ENCODE measurements at regions of chr22 and their contacts with region 1.

Region 1: GRCh38 chr22:27880778-27881394 is 38.2 kb downstream of the PITPNB start:
- DNase-seq: no peak
- ATAC-seq: peak; percentile 78

Region 2: DNA sequence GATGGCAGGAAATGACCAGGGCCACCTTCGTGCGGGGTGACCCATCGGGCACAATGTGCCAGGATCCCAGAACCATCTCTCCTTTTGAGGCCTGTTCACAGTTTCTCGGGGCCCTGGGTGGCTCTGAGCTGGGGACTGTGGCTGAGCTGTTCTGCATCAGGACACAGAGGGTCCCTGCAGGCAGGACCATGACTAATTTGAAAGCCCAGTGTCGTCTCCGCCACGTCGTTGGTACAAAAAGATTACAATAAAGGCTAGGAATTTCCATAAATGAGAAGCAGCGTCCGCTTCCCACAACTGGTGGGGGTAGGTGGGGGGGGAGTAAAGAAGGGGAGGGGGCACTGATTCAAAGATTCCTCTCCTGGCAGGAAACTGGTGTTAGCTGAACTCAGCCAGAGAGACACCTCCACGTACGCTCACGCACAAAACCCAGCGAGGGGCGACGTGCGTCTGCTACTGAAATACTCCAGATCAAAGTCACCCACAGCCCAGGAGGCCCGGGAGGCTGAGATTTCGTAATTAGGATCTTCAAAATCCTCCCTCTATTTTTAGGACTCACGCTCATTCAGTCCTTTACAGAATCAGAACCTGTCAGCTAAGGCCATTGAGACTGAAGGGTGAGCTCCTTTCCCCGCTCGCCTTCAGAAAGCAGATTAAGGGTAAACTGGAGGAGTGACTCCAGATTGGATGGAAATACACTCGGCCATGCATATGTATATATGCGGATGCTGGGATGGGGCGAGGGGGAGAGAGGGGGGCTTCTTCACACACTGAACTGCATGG is 90.3 kb before region 1 on chr22:
- intact Hi-C with region 1: no loop called
- DNase-seq: peak; percentile 75
- ATAC-seq: peak; percentile 56

Region 3: GRCh38 chr22:28009272-28009827 is 128.5 kb after region 1 on chr22:
- intact Hi-C with region 1: loop called (anchors 1 kb)
- DNase-seq: peak; percentile 85
- ATAC-seq: peak; percentile 63

Region 4: GRCh38 chr22:28594797-28595462 is 714.0 kb after region 1 on chr22:
- intact Hi-C with region 1: loop called (anchors 10 kb)
- DNase-seq: no peak
- ATAC-seq: peak; percentile 88